Endothelial cell of umbilical vein (primary cell): ENCODE measurements at regions of chr5 and their contacts with region 1.

Region 1: DNA sequence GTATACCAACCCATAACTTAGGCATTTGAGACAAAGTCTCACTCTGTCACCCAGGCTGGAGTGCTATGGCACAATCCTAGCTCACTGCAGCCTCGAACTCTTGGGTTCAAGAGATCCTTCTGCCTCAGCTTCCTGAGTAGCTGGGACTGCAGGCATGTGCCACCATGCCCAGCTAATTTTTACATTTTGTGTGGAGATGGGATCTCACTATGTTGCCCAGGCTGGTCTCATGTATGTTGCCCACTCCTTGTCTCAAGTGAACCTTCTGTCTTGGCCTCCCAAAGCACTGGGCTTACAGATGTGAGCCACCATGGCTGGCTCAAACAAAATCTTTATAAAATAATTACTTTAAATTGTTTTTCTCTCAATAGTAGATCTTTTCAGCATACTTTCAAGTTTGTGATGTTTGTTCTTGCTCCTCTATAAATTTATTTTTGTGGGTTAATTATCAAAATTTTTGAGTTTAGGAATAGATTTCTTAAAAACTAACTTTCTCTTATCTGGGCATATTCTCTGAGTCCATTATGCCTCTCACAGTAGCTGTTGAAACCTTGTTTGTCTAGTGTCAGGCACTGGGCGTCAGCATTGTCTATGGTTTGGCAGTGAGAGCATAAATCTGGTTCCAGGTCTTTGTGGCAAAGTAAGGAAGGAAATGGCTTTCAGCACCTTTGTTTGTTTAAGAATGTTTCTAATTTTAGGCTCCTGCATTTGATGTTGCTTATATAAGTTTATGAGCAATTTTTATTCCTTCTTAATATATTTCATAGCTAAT is 38.7 kb downstream of the NLN start:
- DNase-seq: peak; percentile 86
- H3K4me3 ChIP-seq: no peak overlapping the region
- H3K27ac ChIP-seq: no peak overlapping the region
- H3K4me1 ChIP-seq: peaks cover 7% of the 10 kb centered on the region
- H3K27me3 ChIP-seq: no peaks in the 10 kb centered on the region
- CTCF ChIP-seq: peak; percentile 19 to 47
- POLR2A ChIP-seq: no peak

Region 2: GRCh38 chr5:66144074-66144833 is 383.6 kb after region 1 on chr5 and contains the start of gene SREK1:
- CTCF ChIA-PET with region 1: no interaction called
- POLR2A ChIA-PET with region 1: interaction called, 4 read pairs
- dilution Hi-C with region 1: no loop called
- intact Hi-C with region 1: loop called (anchors 10 kb)
- DNase-seq: peak; percentile 95
- H3K4me3 ChIP-seq: peak within 1 kb of the TSS; percentile 74 to 98 (median 77)
- H3K27ac ChIP-seq: peak within 1 kb of the TSS; percentile 93
- H3K4me1 ChIP-seq: peaks cover 16% of the 10 kb centered on the region
- H3K27me3 ChIP-seq: peaks cover 2 to 6% of the 10 kb centered on the region in 2 experiments
- CTCF ChIP-seq: no peak
- POLR2A ChIP-seq: peak; percentile 86
- total RNA-seq, gene SREK1: 72.9 and 78.6 TPM in 2 replicates

Region 3: DNA sequence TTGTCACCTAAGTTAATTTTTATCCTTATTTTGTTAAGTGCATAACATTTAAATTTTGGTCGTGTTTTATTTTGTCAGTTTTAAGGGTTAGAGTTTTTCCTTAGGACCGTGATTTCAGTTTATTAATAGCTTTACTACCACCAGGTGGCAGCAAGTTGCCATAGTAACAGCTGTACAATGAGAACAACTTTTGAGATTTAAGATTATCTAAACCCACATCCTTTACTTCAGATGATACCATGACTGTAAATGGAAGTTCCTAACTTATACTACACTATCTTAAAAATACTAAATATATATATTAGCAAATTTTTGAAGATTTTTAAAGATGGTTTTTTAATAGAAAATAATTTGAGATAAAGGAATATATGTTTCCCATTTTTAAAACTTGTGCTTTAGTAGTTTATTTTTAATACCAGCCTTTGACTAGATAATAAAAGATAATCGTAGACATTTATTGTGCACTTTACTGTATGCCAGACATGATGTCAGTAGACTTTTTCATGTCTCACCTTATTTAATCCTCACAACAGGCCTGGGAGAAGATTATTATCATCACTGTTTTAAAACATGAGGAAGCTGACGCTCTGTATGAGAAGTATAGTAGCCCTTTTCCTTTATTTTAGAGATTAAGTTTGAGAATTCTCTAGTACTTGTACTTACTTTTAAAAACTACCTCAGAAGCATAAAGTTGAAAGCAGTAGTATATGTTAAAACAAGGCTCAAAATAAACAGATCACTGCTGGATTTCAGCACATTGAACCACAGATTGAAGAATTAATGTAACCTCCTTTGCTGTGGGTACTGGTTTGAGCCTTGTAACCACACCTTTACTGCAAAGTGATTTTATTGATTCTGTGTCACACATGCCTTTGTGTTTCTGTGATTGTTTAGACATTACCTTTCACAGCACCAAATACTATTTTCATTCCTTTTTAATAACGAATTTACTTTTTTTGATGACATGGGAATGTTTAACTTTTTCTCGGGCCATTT is 411.0 kb after region 1 on chr5:
- CTCF ChIA-PET with region 1: no interaction called
- POLR2A ChIA-PET with region 1: no interaction called
- dilution Hi-C with region 1: no loop called
- intact Hi-C with region 1: loop called (anchors 2 kb)
- DNase-seq: peak; percentile 59
- H3K4me3 ChIP-seq: no peak overlapping the region
- H3K27ac ChIP-seq: no peak overlapping the region
- H3K4me1 ChIP-seq: no peaks in the 10 kb centered on the region
- H3K27me3 ChIP-seq: no peaks in the 10 kb centered on the region
- CTCF ChIP-seq: peak in 1 of 2 donors; percentile 35
- POLR2A ChIP-seq: no peak

Region 4: DNA sequence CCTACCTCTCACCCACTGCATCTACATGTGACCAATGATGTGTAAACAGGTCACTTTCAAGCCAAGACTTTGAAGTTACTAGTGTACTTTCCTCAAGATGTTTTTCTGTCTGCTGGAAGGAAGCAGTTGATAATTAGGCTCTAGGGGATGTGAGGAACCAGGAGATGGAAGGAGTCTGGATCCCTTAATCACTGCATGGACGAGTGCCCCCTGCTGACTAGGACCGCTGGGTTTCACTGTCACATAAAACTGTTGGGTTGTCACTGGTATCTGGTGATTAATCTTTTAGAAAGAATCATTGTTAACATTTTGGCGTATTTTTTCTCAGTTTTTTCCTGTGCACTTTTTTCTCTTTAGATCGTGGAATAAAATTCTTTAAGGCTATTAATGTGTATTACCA is 462.9 kb after region 1 on chr5:
- CTCF ChIA-PET with region 1: no interaction called
- POLR2A ChIA-PET with region 1: no interaction called
- dilution Hi-C with region 1: no loop called
- intact Hi-C with region 1: loop called (anchors 1 kb)
- DNase-seq: peak; percentile 37
- H3K4me3 ChIP-seq: no peak overlapping the region
- H3K27ac ChIP-seq: no peak overlapping the region
- H3K4me1 ChIP-seq: no peaks in the 10 kb centered on the region
- H3K27me3 ChIP-seq: peaks cover 0 to 4% of the 10 kb centered on the region in 2 experiments
- CTCF ChIP-seq: peak; percentile 41 to 44
- POLR2A ChIP-seq: no peak